A549 (cell line): ENCODE measurements at regions of chr12 and their contacts with region 1.

Region 1: DNA sequence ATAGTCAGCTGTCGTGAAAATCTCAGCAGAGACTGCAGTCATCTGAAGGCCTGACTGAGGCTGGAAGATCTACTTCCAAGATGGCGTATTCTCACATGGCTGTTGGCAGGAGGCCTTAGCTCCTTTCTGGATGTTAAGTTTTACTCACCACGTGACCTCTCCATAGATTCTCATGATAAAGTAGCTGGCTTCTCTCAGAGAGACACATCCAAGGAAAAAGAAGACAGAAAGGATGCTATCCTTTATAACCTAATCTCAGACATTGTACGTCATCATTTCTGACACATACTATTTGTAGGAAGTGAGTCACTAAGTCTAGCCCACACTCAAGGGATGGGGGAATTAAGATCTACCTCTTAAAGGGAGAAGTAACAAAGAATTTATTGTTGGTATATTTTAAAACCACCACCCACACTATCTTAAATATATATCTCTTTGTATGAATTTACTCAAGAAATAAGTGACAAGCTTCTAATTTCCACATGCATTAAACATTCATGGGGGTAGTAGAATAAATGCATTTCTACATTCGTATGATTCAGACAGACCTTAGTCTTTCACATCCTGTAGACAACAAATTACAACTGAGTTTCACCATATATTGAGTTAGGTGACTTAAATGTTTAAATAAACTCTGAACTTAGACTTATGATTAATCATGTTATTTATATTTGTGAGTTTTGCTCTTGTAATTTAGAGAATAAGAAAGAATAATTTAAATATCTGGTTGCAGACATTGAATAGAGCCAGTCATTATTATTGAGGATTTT is 411.0 kb downstream of the LRIG3 start:
- DNase-seq: peak; percentile 2 to 72
- ATAC-seq: peak; percentile 74 to 80; a peak in 4 of 6 replicates
- H3K4me3 ChIP-seq: no peak overlapping the region
- H3K27ac ChIP-seq: peak overlapping the region; percentile 53 to 55; a peak in 5 of 6 replicates
- H3K4me1 ChIP-seq: peaks cover 21% of the 10 kb centered on the region
- CTCF ChIP-seq: no peak
- EP300 ChIP-seq: peak; percentile 40 to 42; a peak in 2 of 5 replicates
- POLR2A ChIP-seq: no peak
- RAD21 ChIP-seq: no peak; a peak in 1 of 5 replicates

Region 2: GRCh38 chr12:58405363-58405762 is 103.9 kb before region 1 on chr12:
- CTCF ChIA-PET with region 1: no interaction called
- POLR2A ChIA-PET with region 1: no interaction called
- DNase-seq: no peak
- ATAC-seq: no peak
- H3K4me3 ChIP-seq: no peak overlapping the region
- H3K27ac ChIP-seq: no peak overlapping the region
- H3K4me1 ChIP-seq: no peaks in the 10 kb centered on the region
- CTCF ChIP-seq: no peak
- EP300 ChIP-seq: no peak
- POLR2A ChIP-seq: no peak
- RAD21 ChIP-seq: no peak

Region 3: DNA sequence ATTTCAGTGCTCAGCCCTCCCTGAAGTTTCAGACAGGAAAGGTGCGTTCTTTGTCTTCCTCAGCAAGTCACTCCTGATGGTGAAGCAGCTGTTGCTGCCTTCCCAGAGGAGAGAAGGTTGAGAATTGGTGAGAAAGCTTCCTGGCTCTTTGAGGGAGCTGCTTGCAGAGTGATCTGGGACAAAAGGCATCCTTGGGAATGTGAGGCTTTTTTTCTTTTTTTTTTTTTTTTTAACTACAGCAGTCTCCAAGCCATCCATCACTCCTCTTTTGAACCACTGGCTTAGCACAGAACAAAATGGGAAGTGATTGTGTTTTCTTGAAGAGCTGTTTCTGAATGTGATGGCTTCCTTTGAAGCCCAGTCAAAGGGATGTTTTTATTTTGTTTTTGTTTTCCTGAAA is 531.4 kb after region 1 on chr12:
- CTCF ChIA-PET with region 1: no interaction called
- POLR2A ChIA-PET with region 1: interaction called, 11 read pairs
- DNase-seq: peak in 1 of 2 experiments; percentile 33
- ATAC-seq: peak; percentile 57 to 65; a peak in 5 of 6 replicates
- H3K4me3 ChIP-seq: no peak overlapping the region
- H3K27ac ChIP-seq: peak overlapping the region; percentile 61 to 76
- H3K4me1 ChIP-seq: peaks cover 31% of the 10 kb centered on the region
- CTCF ChIP-seq: no peak
- EP300 ChIP-seq: no peak
- POLR2A ChIP-seq: no peak
- RAD21 ChIP-seq: no peak